HepG2 (cell line): ENCODE measurements at regions of chr2 and their contacts with region 1.

Region 1: GRCh38 chr2:50694798-50695197 is 337.1 kb downstream of the NRXN1 start:
- DNase-seq: no peak
- ATAC-seq: no peak
- H3K4me3 ChIP-seq: no peak overlapping the region
- H3K27ac ChIP-seq: no peak overlapping the region
- H3K4me1 ChIP-seq: no peaks in the 10 kb centered on the region
- H3K27me3 ChIP-seq: no peaks in the 10 kb centered on the region
- CTCF ChIP-seq: no peak
- EP300 ChIP-seq: no peak
- POLR2A ChIP-seq: no peak
- RAD21 ChIP-seq: no peak

Region 2: DNA sequence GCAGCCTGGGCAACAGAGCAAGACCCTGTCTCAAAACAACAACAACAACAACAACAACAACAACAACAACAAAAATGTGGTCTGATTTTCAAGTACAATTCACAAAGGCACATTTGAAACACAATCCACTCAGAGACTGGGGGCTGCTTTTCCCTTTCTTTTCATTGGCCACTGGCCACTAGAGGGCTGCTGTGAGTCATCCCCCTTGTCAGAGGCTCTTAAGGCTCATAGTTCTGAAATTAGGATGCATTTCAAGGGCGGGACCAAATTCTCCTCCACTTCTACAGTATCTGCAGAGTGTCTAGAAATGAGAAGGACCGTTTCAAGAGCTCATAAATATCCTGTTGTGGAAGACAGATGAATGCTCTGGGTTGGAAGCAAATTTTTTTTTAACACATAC is 51.7 kb after region 1 on chr2:
- CTCF ChIA-PET with region 1: no interaction called
- POLR2A ChIA-PET with region 1: no interaction called
- in situ Hi-C with region 1: no loop called
- intact Hi-C with region 1: loop called (anchors 1 kb)
- DNase-seq: peak; percentile 22
- ATAC-seq: peak; percentile 88
- H3K4me3 ChIP-seq: no peak overlapping the region
- H3K27ac ChIP-seq: no peak overlapping the region
- H3K4me1 ChIP-seq: no peaks in the 10 kb centered on the region
- H3K27me3 ChIP-seq: no peaks in the 10 kb centered on the region
- CTCF ChIP-seq: peak; percentile 50
- EP300 ChIP-seq: no peak
- POLR2A ChIP-seq: no peak
- RAD21 ChIP-seq: no peak